HAP-1 (cell line): ENCODE measurements at regions of chr5 and their contacts with region 1.

Region 1: GRCh38 chr5:172984243-172984953 is 827 bp downstream of the ATP6V0E1 start:
- DNase-seq: peak; percentile 84 to 85
- H3K4me3 ChIP-seq: peak overlapping the region; percentile 78
- H3K4me1 ChIP-seq: peaks cover 7% of the 10 kb centered on the region
- H3K27me3 ChIP-seq: no peaks in the 10 kb centered on the region

Region 2: GRCh38 chr5:173057062-173057924 is 72.9 kb after region 1 on chr5:
- in situ Hi-C with region 1: loop called (anchors 5 kb)
- DNase-seq: peak; percentile 93 to 100
- H3K4me3 ChIP-seq: peak overlapping the region; percentile 69
- H3K4me1 ChIP-seq: no peaks in the 10 kb centered on the region
- H3K27me3 ChIP-seq: no peaks in the 10 kb centered on the region

Region 3: GRCh38 chr5:173144200-173145176 is 160.1 kb after region 1 on chr5 and contains the start of gene BNIP1:
- in situ Hi-C with region 1: loop called (anchors 10 kb)
- DNase-seq: peak; percentile 84 to 96
- H3K4me3 ChIP-seq: peak within 1 kb of the TSS; percentile 97
- H3K4me1 ChIP-seq: peaks cover 9% of the 10 kb centered on the region
- H3K27me3 ChIP-seq: no peaks in the 10 kb centered on the region

Region 4: GRCh38 chr5:173283318-173284288 is 299.2 kb after region 1 on chr5:
- in situ Hi-C with region 1: loop called (anchors 10 kb)
- DNase-seq: peak; percentile 46 to 85
- H3K4me3 ChIP-seq: no peak overlapping the region
- H3K4me1 ChIP-seq: peaks cover 3% of the 10 kb centered on the region; the same call in 1 of the 2 replicates
- H3K27me3 ChIP-seq: peaks cover 10% of the 10 kb centered on the region; the same call in 1 of the 2 replicates

Region 5: DNA sequence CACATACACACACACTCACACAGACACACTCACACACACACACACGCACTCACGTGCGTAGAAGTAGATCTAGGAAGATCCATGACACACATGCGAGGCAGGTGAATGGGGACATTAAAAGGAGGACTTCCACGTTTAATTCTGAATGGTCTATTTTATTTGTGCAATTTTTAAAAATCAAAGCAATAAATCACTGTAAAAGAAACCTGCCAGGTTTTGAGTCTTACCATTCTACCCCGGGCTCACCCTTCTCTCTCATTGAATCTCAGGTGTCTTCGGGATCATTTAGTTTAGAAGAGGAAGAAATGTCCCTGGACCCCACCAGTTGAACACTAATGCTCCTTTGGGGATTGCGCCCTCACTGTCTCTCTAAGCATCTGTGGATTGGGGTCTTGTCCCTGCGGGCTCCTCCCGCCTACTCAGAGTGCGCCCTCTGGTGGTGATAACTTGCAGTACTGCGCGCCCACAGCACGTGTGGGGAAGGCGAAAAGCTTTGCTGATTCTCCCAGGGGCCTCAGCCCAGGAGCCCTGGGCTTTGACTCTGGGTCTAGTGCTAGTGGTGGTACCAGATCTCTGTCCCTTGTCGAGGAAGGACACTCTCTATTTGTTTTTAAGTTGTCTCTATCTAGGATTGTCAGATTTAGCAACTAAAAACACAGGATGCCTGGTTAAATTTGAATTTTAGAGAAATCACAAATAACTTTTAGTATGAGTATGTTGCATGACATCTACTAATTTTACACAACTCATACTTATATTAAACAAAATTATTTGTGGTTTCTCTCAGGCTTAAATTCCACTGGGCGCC is 597.2 kb after region 1 on chr5:
- in situ Hi-C with region 1: loop called (anchors 25 kb)
- DNase-seq: peak; percentile 21 to 85
- H3K4me3 ChIP-seq: no peak overlapping the region
- H3K4me1 ChIP-seq: no peaks in the 10 kb centered on the region
- H3K27me3 ChIP-seq: no peaks in the 10 kb centered on the region